ENCODE measurements at regions of chr10 and their contacts with region 1.

Region 1: GRCh38 chr10:15725603-15726002 is 5.9 kb upstream of the ITGA8 start:
- DNase-seq: no peak
- H3K4me3 ChIP-seq: peak overlapping the region in 1 of 2 donors; percentile 43
- H3K27ac ChIP-seq: peak overlapping the region; percentile 91 to 95
- H3K4me1 ChIP-seq: peaks cover 7 to 35% of the 10 kb centered on the region in 2 donors
- H3K27me3 ChIP-seq: no peaks in the 10 kb centered on the region
- CTCF ChIP-seq: peak; percentile 42 to 68 (median 48)

Region 2: DNA sequence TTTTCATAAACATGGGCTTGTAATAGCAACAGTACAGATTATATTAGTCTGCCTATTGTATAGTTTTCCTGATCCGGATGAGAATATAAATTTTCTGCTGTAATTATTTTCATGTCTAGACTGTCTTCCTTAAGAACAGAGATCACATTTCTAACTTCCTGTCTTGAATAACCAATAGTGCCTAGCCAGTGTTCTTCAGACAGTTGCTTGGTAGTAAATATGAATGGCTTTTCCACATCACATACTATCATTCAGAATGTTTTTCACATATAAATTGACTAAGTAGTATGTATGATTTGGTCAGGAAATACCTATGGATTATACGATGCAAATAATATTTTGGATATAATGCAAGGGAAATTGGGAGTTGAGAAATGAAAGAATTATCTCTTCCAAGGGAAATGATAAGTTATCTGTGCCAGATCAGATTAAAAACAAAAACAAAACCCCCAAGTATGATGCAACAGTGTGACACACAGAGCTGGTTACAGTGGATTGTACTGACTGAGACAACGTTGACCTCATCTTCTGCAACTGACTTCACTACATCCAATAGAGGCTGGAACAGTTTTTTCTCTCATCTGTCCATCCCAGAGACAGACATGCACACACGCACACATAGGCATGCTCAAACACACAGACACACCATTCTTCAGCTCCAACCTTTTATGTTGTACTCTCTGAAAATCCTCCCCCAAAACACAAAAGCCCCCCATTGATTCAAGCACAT is 22.3 kb before region 1 on chr10:
- intact Hi-C with region 1: no loop called
- DNase-seq: no peak
- H3K4me3 ChIP-seq: no peak overlapping the region
- H3K27ac ChIP-seq: peak overlapping the region; percentile 10 to 58
- H3K4me1 ChIP-seq: peaks cover 11 to 56% of the 10 kb centered on the region in 2 donors
- H3K27me3 ChIP-seq: no peaks in the 10 kb centered on the region
- CTCF ChIP-seq: no peak

Region 3: DNA sequence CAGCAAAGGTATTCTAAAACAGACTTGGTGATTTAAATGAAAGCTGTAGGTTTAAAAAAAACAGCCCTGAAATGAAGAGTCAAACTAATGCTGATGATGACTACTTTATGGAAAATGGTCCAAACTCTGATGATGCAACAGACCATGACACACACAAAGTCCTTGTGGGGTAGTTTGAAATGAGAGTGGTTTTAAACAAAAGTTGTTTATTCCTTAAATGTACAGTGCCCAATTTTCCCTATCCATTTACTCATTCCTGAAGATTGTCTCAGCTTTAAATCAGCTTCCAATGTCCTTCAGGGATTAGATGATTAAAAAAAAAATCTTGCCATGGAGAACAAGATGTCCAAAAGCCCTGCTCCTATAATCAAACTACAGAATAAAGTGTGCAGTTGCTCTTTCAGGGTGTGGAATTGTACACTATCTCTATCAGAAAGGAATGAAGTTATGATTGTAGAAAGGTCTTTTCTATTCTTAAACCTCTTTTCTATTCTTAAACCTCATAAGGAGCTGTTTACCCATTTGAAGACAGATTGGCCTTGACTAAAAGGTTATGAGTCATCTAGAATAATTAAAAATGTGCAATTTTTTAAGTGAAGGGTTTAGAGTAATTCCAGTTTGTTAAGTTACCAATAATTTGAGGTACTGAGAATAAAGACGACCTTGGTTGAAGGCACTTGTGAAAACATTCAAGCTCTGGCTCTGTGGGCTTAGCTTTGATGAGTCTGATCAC is 64.4 kb after region 1 on chr10:
- intact Hi-C with region 1: loop called (anchors 2 kb)
- DNase-seq: no peak
- H3K4me3 ChIP-seq: no peak overlapping the region
- H3K27ac ChIP-seq: peak overlapping the region; percentile 85 to 87
- H3K4me1 ChIP-seq: peaks cover 5 to 74% of the 10 kb centered on the region in 2 donors
- H3K27me3 ChIP-seq: no peaks in the 10 kb centered on the region
- CTCF ChIP-seq: no peak

Region 4: DNA sequence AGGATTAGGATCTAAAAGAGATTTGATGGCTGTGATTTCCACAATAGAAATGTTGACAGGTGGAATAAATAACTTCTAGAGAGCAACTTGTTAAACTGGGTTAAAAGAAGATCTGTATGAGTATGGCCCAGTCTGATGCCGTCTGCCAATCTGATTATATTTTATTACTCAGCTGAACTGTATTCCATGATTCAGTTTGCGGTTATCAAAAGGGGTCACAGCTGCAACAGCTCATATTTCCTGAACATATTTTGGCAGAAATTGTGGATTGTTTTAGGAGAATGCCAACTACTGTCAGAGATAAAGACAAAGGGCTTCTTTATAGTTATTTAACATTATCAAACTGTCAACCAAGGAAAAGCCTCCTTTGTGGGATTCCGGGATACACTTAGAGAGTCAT is 379.5 kb after region 1 on chr10:
- intact Hi-C with region 1: no loop called
- DNase-seq: no peak
- H3K4me3 ChIP-seq: no peak overlapping the region
- H3K27ac ChIP-seq: no peak overlapping the region
- H3K4me1 ChIP-seq: no peaks in the 10 kb centered on the region
- H3K27me3 ChIP-seq: no peaks in the 10 kb centered on the region
- CTCF ChIP-seq: no peak

Measured in ascending aorta (tissue), 2 donors.